Right ventricle myocardium superior (tissue), 1 donor: ENCODE measurements at regions of chr17 and their contacts with region 1.

Region 1: DNA sequence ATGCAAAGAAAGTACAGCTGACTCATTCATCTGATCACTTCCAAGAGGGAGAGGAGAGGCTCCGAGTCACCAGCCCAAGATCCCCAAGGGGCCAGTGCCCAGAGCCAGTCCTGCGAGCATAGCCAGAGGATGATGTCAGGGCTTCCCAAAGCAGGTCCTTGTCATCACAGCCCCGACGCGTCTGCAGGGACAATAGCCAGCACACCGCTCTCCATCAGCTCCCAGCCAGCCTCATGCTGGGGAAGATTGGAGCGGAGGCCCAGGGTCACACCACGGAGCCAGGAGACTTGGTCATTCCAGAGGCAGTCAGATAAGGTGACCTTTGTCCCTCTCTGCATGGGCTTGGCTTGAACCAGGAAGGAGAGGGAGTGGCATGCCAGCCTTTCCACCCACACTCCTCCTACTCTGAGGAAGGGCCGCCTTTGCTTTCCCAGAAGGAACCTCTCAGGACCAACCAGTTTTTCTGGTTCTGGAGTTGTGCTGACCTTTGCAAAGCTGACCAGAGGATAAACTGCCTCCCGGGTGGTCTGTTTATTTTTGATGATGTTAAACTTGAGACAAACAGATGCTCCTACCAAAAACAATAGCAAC is 58.3 kb upstream of the ARHGAP44 start:
- DNase-seq: peak; percentile 89
- ATAC-seq: peak; percentile 78

Region 2: DNA sequence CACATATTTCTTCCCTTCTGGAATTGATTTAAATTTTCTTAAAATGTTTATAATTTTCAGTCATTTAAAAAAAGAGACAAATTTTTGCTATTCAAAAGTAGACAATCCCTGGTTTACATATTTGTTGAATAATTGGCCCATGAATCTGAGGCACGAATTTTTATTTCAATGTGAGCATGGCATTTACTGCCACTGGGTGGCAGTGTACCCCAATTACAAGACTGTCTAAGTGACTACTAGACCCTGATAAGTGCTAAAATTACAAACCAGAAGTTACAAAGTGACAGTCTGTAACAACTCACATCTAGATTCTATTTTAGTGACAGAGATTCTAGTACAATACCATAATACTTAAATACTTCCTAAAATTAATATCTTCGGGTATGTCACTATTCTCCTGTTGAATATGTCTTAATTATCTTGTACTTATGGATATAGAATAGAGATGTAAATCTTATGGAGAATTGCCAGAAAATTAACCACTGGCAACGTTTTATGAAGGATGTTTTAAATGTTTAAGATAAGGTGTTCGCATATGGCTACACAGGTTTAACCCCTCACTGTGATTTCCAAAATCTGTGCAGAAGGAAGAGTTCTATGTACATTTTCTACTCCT is 474.5 kb before region 1 on chr17:
- intact Hi-C with region 1: loop called (anchors 10 kb)
- DNase-seq: no peak
- ATAC-seq: peak; percentile 84

Region 3: GRCh38 chr17:12680407-12680897 is 50.6 kb before region 1 on chr17:
- intact Hi-C with region 1: loop called (anchors 5 kb)
- DNase-seq: no peak
- ATAC-seq: peak; percentile 25